ENCODE measurements at regions of chr17 and their contacts with region 1.

Region 1: DNA sequence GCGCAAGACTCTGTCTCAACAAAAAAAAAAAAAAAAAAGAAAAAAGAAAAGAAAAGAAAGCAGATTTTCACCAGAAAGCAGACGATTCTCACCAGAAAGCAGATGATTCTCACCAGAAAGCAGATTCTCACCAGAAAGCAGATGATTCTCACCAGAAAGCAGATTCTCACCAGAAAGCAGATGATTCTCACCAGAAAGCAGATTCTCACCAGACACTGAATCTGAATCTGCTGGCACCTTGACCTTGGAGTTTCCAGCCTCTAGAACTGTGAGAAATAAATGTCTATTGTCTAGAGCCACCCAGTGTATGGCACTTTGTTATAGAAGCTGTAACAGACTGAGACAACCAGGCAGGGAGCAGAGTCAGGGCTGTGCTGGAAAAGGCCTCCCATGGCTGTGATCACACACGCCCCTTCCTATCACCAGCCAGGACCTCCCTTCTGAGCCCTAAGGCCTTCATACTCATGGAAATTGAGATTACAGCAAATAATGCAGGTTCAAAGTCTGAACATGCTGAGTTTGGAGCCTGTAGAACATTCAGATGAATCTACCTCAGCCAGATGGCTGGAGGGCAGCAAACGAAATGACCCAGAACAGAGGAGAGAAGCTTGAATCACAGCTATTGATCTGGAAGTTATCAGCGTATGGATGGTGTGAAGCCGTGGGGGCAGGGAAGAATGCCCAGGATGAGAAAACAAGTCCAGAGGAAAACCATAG is 309.3 kb downstream of the SLC39A11 start:
- DNase-seq: no peak

Region 2: GRCh38 chr17:71387456-71387855 is 1395.7 kb before region 1 on chr17:
- intact Hi-C with region 1: loop called in 1 of 2 experiments (anchors 5 kb)
- DNase-seq: no peak